GM13976 (cell line): ENCODE measurements at regions of chr18 and their contacts with region 1.

Region 1: DNA sequence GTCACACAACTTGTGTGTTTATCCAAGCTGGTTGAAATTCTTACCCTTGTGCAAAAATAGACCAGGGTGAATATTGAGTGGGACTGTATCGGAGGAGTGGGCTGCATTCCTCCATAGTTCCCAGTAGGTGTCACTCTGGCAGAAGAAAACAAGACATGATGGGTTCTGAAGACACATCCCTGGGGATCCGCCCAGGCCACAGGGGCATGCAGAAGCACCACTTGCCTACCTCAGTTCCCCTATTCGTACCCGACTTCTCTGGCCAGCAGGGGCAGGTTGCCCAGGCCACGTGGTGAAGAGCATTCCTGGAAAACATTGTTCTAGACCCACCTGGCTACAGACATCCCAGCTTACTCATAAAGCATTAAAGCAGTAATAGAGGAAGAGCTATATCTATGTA is 168.2 kb downstream of the FAM210A start:
- DNase-seq: peak; percentile 75
- CTCF ChIP-seq: peak; percentile 78

Region 2: GRCh38 chr18:12990967-12991838 is 566.9 kb before region 1 on chr18 and contains the start of gene CEP192:
- in situ Hi-C with region 1: loop called (anchors 25 kb)
- DNase-seq: peak; percentile 97
- CTCF ChIP-seq: peak; percentile 14

Region 3: DNA sequence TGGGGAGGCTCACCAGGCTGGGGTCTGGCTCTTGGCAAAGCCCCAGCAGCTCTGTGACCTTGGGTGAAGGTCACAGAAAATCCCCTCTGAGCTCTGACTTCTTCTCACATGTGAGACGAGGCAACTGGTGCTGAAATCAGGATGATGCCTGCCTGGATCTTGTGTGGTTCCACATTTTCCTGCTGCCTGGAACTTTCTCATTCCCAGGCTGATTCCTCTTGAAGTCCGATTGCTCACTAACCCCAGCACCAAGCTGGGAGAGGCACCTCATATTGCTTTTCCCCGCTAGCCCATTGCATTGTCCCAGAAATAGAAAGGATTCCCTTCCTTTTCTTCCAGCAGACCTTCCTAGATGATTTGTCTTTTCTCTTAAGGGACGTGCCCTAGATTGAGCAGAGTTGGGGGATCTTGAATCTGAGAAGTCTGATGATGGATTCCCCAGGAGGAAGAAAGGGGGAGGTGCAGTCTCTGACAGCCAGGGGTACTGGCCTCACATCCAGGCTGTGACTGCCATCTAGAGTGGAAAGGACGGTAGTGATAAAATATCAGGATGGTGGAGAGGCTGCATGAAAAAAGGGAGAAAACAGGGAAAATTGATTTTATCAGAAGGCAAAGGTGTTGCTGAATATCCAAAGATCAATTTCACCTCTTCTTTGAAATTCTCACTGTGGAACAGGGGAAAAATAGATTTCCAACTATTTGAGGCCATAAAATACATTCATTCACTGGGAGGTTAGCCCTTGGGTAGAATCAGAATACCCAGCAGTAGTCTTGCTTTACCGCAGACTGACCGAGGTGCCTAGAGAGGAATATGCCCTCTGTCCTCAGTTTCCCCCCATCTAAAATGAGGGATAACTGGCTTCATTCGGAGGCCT is 72.0 kb after region 1 on chr18:
- in situ Hi-C with region 1: loop called (anchors 5 kb)
- DNase-seq: peak; percentile 86
- CTCF ChIP-seq: peak; percentile 44

Region 4: DNA sequence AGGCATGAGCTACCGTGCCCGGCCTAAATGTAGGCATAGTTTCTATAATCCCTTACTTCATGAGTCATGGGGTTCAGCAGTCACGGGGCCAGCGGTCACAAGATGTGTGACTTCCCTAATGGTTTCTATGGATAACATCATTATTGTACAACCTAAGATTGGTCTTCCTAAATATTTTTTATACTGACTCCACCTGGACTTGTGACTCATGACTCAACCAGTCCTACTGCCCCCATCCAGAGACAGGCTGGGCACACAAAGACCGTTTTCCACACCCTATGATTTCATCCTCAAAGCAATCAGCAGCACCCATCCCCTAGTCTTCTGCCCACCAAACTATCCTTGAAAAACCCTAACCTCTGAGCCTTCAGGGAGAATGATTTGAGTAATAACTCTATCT is 152.3 kb after region 1 on chr18:
- in situ Hi-C with region 1: no loop called
- DNase-seq: no peak
- CTCF ChIP-seq: no peak

Region 5: DNA sequence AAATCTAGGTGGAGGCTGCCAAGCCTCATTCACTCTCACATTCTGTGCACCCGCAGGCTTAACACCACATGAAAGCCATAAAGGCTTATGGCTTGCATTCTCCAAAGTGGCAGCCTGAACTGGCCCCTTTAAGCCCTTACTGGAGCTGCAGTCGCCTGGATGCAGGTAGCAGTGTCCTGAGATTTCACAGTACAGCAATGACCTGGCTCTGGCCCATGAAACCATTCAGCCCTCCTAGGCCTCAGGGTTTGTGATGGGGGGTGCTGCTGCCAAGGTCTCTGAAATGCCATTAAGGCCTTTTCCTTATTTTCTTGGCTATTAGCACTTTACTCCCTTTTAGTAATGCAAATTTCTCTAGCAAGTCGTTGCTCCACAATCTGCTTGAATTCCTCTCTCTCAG is 216.9 kb after region 1 on chr18:
- in situ Hi-C with region 1: no loop called
- DNase-seq: no peak
- CTCF ChIP-seq: no peak

Region 6: DNA sequence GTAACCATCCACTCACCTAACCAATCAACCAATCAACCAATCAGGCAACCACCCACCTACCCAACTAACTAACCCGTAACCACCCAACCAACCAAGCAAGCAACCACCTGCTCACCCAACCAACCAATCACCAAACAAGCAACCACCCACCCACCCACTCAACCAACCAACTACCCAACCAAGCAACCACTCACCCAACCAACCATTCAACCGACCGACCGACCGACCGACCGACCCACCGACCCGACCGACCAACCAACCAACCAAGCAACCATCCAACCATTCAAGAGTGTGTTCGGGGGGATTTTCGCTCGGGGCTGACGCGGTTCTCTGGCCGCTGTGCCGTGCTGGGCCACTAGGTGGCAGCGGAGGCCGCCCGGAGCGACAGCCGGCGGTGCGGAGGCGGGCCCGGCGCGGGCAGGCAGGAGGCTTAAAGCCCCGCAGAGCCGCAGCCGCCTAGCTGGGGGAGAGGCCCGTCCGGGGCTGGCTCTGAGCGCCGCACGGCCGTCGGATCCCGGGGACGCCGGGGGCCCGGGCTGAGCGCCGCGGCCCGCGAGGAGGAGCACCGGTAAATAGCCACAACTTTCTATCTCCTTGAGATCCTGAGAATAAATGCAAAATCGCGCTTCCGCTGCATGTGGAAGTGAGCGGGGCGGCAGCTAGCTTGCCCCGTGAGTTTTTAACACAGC is 265.7 kb after region 1 on chr18 and contains the start of gene MC5R:
- in situ Hi-C with region 1: loop called (anchors 25 kb)
- DNase-seq: peak; percentile 94
- CTCF ChIP-seq: peak; percentile 99

Region 7: GRCh38 chr18:14179305-14179704 is 621.2 kb after region 1 on chr18:
- in situ Hi-C with region 1: no loop called
- DNase-seq: no peak
- CTCF ChIP-seq: no peak